T-cell (primary cell): ENCODE measurements at regions of chr13 and their contacts with region 1.

Region 1: DNA sequence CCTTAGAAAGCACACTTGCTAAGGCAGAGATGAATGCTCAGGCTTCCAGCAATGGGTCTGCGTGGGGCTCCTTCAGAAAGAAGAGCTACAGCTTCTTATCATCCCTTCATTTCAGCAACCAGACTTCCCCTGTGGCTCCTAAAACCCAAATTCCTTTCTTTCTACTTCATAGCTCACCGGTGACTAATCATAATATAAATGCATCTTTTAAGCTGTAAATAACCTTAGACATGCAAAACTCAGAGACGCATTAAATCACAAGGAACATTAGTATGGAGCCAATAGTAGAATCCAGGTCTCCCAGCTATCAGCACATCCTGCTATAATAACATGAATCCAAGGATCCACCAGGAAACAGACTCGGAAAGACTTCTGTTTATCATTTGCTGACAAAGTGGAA is 375.6 kb downstream of the COG6 start:
- DNase-seq: no peak
- ATAC-seq: no peak
- H3K4me3 ChIP-seq: no peak overlapping the region
- H3K4me3 Mint-ChIP-seq: no peak overlapping the region
- H3K27ac ChIP-seq: no peak overlapping the region
- H3K27ac Mint-ChIP-seq: no peak overlapping the region
- H3K4me1 ChIP-seq: peaks cover 8 to 10% of the 10 kb centered on the region in 2 experiments
- H3K4me1 Mint-ChIP-seq: peaks cover 17 to 21% (median 17%) of the 10 kb centered on the region in 3 donors
- H3K27me3 ChIP-seq: no peaks in the 10 kb centered on the region
- H3K27me3 Mint-ChIP-seq: no peaks in the 10 kb centered on the region

Region 2: DNA sequence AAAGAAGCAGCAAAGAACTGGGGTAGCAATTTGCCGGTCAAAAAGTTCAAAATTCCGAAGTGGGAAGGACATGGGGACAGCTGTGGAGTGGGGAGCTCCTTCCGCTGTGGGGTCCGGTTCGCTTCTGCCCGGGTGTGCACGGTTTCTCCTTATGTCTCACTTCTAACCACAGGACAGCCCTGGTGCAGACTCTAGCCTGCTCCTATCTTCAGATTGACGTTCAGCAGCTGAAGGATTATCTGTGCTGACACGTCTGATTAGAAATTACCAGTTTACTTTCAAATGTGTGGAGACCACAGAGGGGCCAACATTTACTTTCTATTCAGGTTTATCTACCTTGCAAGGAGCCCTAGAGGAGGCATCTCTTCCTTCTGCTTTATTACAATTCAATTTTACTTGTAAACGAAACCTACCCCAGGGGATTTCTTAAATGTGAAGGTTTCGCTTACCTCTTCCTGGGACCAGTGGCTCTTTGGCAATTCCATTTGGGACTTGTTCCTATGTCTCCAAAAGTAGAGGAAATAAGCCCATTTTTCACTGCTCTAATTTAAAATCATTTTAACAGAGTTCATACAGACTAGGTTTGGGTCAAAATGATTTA is 455.3 kb before region 1 on chr13:
- CTCF ChIA-PET with region 1: no interaction called
- POLR2A ChIA-PET with region 1: no interaction called
- DNase-seq: no peak
- ATAC-seq: no peak
- H3K4me3 ChIP-seq: no peak overlapping the region
- H3K4me3 Mint-ChIP-seq: no peak overlapping the region
- H3K27ac ChIP-seq: no peak overlapping the region
- H3K27ac Mint-ChIP-seq: no peak overlapping the region
- H3K4me1 ChIP-seq: no peaks in the 10 kb centered on the region
- H3K4me1 Mint-ChIP-seq: no peaks in the 10 kb centered on the region
- H3K27me3 ChIP-seq: peaks cover 0 to 11% of the 10 kb centered on the region in 2 experiments
- H3K27me3 Mint-ChIP-seq: peaks cover 17 to 18% of the 10 kb centered on the region in 2 donors

Region 3: GRCh38 chr13:40084934-40085333 is 53.9 kb after region 1 on chr13:
- CTCF ChIA-PET with region 1: no interaction called
- POLR2A ChIA-PET with region 1: interaction called in 1 of 2 experiments, 11 read pairs
- DNase-seq: no peak
- ATAC-seq: no peak
- H3K4me3 ChIP-seq: no peak overlapping the region
- H3K4me3 Mint-ChIP-seq: no peak overlapping the region
- H3K27ac ChIP-seq: no peak overlapping the region
- H3K27ac Mint-ChIP-seq: no peak overlapping the region
- H3K4me1 ChIP-seq: no peaks in the 10 kb centered on the region
- H3K4me1 Mint-ChIP-seq: no peaks in the 10 kb centered on the region
- H3K27me3 ChIP-seq: no peaks in the 10 kb centered on the region
- H3K27me3 Mint-ChIP-seq: no peaks in the 10 kb centered on the region